K562 (cell line): ENCODE measurements at regions of chr16 and their contacts with region 1.

Region 1: DNA sequence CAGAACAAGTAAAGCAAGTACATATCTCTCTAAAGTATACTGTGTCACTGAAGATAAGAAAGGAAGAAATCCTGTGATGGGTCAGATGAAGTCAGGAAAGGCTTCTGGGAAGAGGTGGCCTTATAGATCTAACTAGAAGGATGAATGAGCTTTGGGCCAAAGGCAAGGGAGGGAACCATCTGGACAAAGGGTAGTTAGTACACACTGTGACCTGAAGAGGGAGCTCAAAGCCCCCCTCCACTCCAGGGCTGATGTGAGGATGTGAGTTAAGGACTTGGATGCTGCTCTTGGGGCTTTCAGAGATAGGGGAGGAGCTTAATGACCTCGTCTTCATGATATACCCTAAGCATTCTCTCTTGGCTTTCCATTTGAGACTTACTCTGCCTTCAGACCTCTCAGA is 185.3 kb upstream of the CACNG3 start:
- DNase-seq: peak; percentile 79 to 83 (median 81)
- ATAC-seq: peak; percentile 94
- H3K4me3 ChIP-seq: no peak overlapping the region
- H3K27ac ChIP-seq: no peak overlapping the region
- H3K4me1 ChIP-seq: peaks cover 3 to 19% of the 10 kb centered on the region in 2 experiments; a peak in 4 of 5 replicates
- H3K27me3 ChIP-seq: no peaks in the 10 kb centered on the region
- CTCF ChIP-seq: peak; percentile 72 to 85 (median 83)
- EP300 ChIP-seq: no peak
- POLR2A ChIP-seq: no peak
- RAD21 ChIP-seq: peak; percentile 54 to 81

Region 2: GRCh38 chr16:23996258-23996955 is 74.4 kb before region 1 on chr16:
- CTCF ChIA-PET with region 1: no interaction called
- POLR2A ChIA-PET with region 1: no interaction called
- in situ Hi-C with region 1: no loop called
- intact Hi-C with region 1: no loop called
- DNase-seq: no peak
- ATAC-seq: no peak
- H3K4me3 ChIP-seq: no peak overlapping the region
- H3K27ac ChIP-seq: no peak overlapping the region
- H3K4me1 ChIP-seq: peaks cover 0 to 2% of the 10 kb centered on the region in 2 experiments; a peak in 1 of 5 replicates
- H3K27me3 ChIP-seq: no peaks in the 10 kb centered on the region
- CTCF ChIP-seq: no peak
- EP300 ChIP-seq: no peak
- POLR2A ChIP-seq: no peak
- RAD21 ChIP-seq: no peak

Region 3: GRCh38 chr16:24036614-24037013 is 34.2 kb before region 1 on chr16:
- CTCF ChIA-PET with region 1: no interaction called
- POLR2A ChIA-PET with region 1: no interaction called
- in situ Hi-C with region 1: no loop called
- intact Hi-C with region 1: no loop called
- DNase-seq: peak; percentile 37 to 57 (median 41)
- ATAC-seq: peak; percentile 68
- H3K4me3 ChIP-seq: no peak overlapping the region
- H3K27ac ChIP-seq: no peak overlapping the region
- H3K4me1 ChIP-seq: peaks cover 0 to 3% of the 10 kb centered on the region in 2 experiments; a peak in 2 of 5 replicates
- H3K27me3 ChIP-seq: no peaks in the 10 kb centered on the region; a peak in 1 of 5 replicates
- CTCF ChIP-seq: peak; percentile 52 to 63 (median 58)
- EP300 ChIP-seq: no peak
- POLR2A ChIP-seq: no peak
- RAD21 ChIP-seq: peak; percentile 62 to 75

Region 4: GRCh38 chr16:24208710-24209109 is 137.9 kb after region 1 on chr16:
- CTCF ChIA-PET with region 1: no interaction called
- POLR2A ChIA-PET with region 1: no interaction called
- in situ Hi-C with region 1: no loop called
- intact Hi-C with region 1: loop called (anchors 10 kb)
- DNase-seq: no peak
- ATAC-seq: no peak
- H3K4me3 ChIP-seq: no peak overlapping the region
- H3K27ac ChIP-seq: no peak overlapping the region
- H3K4me1 ChIP-seq: peaks cover 0 to 6% of the 10 kb centered on the region in 2 experiments; a peak in 1 of 5 replicates
- H3K27me3 ChIP-seq: no peaks in the 10 kb centered on the region
- CTCF ChIP-seq: no peak
- EP300 ChIP-seq: no peak
- POLR2A ChIP-seq: no peak
- RAD21 ChIP-seq: no peak

Region 5: GRCh38 chr16:24253192-24253591 is 182.3 kb after region 1 on chr16:
- CTCF ChIA-PET with region 1: no interaction called
- POLR2A ChIA-PET with region 1: no interaction called
- in situ Hi-C with region 1: no loop called
- intact Hi-C with region 1: loop called (anchors 2 kb)
- DNase-seq: peak; percentile 63 to 73 (median 67)
- ATAC-seq: peak; percentile 89
- H3K4me3 ChIP-seq: no peak overlapping the region
- H3K27ac ChIP-seq: no peak overlapping the region
- H3K4me1 ChIP-seq: peaks cover 0 to 8% of the 10 kb centered on the region in 2 experiments; a peak in 1 of 5 replicates
- H3K27me3 ChIP-seq: peaks cover 5 to 12% of the 10 kb centered on the region in 2 experiments; a peak in 2 of 5 replicates
- CTCF ChIP-seq: peak; percentile 61 to 75 (median 71)
- EP300 ChIP-seq: no peak
- POLR2A ChIP-seq: no peak
- RAD21 ChIP-seq: peak; percentile 46 to 75